Transverse colon (tissue), 4 donors: ENCODE measurements at regions of chr7 and their contacts with region 1.

Region 1: DNA sequence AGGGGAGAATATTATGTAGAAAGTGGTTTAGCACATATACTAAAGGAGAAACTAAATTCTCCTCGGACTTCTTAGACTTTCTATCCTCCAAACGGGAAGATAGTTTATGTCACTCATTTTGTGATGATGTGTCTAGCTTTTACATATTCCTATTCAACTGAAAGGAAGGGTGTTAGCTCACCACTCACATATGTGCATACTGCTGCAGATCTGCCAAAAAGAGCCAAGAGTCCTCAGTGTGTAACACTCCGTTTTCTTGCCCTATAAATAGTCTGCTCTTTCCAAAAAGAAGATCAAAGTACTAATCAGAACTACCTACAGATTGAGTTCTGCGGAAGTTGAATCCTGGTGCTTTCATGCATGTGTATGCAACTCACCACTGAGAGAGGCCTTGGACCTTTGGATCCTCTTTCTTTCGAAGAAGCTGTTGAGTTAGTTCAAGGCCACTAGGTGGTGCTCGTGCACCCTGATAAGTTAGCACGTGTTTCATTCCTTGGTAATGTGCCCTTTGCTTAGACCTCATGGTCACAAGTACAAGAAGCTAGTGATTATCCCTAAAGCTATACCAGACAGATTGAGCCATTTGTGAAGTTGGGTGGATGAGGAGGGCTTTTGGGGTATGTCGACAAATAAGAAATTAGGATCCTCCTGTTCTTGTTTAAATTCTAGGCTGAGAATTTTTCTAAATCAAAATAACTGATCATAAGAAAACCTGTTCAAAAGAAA is 14.1 kb downstream of the YAE1 start:
- DNase-seq: peak; percentile 85
- H3K4me3 ChIP-seq: no peak overlapping the region
- H3K27ac ChIP-seq: no peak overlapping the region
- H3K4me1 ChIP-seq: peaks cover 0 to 4% (median 0%) of the 10 kb centered on the region in 4 donors
- H3K27me3 ChIP-seq: no peaks in the 10 kb centered on the region
- CTCF ChIP-seq: peak; percentile 81 to 93 (median 85)
- EP300 ChIP-seq: no peak
- POLR2A ChIP-seq: no peak

Region 2: GRCh38 chr7:38873433-38873832 is 706.9 kb before region 1 on chr7:
- in situ Hi-C with region 1: no loop called
- intact Hi-C with region 1: no loop called
- DNase-seq: no peak
- H3K4me3 ChIP-seq: no peak overlapping the region
- H3K27ac ChIP-seq: no peak overlapping the region
- H3K4me1 ChIP-seq: peaks cover 0 to 5% (median 0%) of the 10 kb centered on the region in 4 donors
- H3K27me3 ChIP-seq: no peaks in the 10 kb centered on the region
- CTCF ChIP-seq: no peak
- EP300 ChIP-seq: no peak
- POLR2A ChIP-seq: no peak

Region 3: DNA sequence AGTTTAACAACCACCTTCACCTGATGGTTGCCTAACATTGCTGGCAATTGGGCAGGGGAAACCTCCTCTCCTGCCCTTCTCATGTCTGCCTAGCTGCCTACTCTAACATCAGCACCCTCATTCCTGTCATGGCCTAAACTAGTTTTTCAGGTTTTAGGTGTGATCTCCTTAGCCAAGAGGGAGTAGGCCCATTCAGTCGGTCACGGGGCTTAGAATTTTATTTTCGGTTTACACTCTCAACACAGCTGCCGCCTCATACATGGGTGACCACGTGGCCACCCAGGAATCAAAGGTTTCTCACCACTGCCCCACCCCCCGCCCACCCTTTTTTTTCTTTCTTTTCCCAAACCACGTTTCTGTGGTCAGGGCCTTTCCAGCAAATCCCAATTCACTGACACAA is 140.3 kb after region 1 on chr7:
- in situ Hi-C with region 1: no loop called
- intact Hi-C with region 1: no loop called
- DNase-seq: peak; percentile 70
- H3K4me3 ChIP-seq: no peak overlapping the region
- H3K27ac ChIP-seq: peak overlapping the region; percentile 69 to 84 (median 74)
- H3K4me1 ChIP-seq: peaks cover 0 to 24% (median 12%) of the 10 kb centered on the region in 4 donors
- H3K27me3 ChIP-seq: no peaks in the 10 kb centered on the region
- CTCF ChIP-seq: no peak
- EP300 ChIP-seq: peak; percentile 47
- POLR2A ChIP-seq: no peak

Region 4: DNA sequence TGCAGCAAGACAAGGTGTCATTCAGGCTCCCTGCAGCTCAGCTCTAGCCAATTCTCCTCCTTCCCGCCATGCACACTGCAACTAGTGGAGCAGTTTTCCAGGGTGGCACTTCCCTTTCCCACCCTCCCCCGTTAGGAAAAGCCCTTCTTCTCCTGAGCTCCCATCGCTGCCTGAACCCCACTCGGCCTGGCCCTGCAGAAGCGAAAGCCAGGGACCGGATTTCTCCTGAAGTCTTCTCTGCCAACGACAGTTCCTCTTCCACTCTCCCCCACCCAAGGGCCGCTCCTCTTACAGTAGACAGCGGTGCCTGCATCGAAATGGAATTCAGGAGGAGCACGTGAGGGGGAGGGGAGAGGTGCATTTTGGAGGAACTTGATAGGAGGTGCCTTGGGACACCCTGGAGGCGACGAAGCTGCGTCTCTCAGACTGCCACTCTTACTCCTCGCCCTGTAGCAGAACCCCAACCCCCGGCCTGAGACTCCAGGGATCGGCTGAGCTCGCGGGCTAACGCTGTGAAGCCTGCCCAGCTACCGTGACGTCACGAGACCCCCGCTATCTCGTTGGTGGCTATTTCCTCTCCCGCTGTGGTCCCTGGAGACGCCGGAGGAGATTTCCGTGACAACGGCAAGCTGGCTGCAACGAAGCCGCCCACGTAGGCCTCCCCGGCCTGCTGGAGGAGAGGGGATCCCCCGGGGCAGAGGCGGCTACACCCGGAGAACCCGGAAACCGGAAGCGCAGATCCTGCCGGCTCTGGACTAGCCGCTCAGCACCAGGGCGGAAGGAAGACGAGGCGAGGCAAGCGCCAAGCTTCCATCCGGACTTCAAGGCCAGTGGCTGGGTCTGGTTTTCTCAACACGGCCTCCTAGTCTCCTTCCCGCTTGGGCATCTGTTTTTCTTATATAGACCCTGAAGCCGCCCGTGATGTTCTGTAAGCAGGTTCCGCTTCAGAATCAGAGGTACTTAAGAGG is 152.8 kb after region 1 on chr7:
- in situ Hi-C with region 1: loop called in 1 of 4 experiments (anchors 10 kb)
- intact Hi-C with region 1: no loop called
- DNase-seq: peak; percentile 91
- H3K4me3 ChIP-seq: peak overlapping the region; percentile 27 to 63 (median 46)
- H3K27ac ChIP-seq: peak overlapping the region; percentile 71 to 84 (median 76)
- H3K4me1 ChIP-seq: peaks cover 8 to 29% (median 15%) of the 10 kb centered on the region in 4 donors
- H3K27me3 ChIP-seq: no peaks in the 10 kb centered on the region
- CTCF ChIP-seq: no peak
- EP300 ChIP-seq: no peak
- POLR2A ChIP-seq: peak; percentile 64

Region 5: DNA sequence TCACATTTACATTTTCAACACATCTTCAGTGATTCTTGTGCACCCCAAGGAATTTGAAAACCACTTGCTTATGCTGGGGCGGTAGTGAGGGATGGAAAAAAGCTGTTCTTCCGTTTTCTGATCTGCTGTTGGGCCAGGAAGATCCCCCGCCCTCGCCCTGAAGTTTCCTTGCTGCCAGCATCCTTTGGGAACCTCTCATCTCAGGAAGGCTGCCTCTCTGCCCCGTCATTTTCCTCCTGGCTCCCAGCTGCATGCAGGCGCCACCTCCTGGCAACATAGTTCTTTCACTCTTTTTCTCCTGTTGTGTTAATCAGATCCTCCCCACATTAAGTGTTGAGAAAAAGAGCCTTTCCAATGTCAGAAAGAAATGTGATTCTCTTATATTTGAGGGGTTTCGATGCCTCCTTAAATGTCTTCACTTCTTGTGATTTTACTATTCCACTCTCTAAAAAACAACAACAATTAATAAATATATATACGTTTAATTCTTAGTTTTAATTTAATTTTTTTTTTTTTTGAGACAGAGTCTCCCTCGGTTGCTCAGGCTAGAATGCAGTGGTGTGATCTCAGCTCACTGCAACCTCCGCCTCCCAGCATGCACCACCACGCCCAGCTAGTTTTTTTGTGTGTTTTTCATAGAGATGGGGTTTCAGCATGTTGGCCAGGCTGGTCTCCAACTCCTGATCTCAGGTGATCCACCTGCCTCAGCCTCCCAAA is 165.9 kb after region 1 on chr7:
- in situ Hi-C with region 1: loop called in 3 of 4 experiments (anchors 5 kb)
- intact Hi-C with region 1: loop called (anchors 5 kb)
- DNase-seq: peak; percentile 78
- H3K4me3 ChIP-seq: no peak overlapping the region
- H3K27ac ChIP-seq: no peak overlapping the region
- H3K4me1 ChIP-seq: peaks cover 0 to 5% (median 1%) of the 10 kb centered on the region in 4 donors
- H3K27me3 ChIP-seq: no peaks in the 10 kb centered on the region
- CTCF ChIP-seq: peak; percentile 65 to 80 (median 71)
- EP300 ChIP-seq: no peak
- POLR2A ChIP-seq: no peak

Region 6: GRCh38 chr7:40047661-40048060 is 467.3 kb after region 1 on chr7:
- in situ Hi-C with region 1: loop called in 1 of 4 experiments (anchors 25 kb)
- intact Hi-C with region 1: no loop called
- DNase-seq: no peak
- H3K4me3 ChIP-seq: no peak overlapping the region
- H3K27ac ChIP-seq: no peak overlapping the region
- H3K4me1 ChIP-seq: no peaks in the 10 kb centered on the region
- H3K27me3 ChIP-seq: no peaks in the 10 kb centered on the region
- CTCF ChIP-seq: peak in 1 of 5 experiments; percentile 17
- EP300 ChIP-seq: no peak
- POLR2A ChIP-seq: no peak